ENCODE measurements at regions of chr5 and their contacts with region 1.

Region 1: DNA sequence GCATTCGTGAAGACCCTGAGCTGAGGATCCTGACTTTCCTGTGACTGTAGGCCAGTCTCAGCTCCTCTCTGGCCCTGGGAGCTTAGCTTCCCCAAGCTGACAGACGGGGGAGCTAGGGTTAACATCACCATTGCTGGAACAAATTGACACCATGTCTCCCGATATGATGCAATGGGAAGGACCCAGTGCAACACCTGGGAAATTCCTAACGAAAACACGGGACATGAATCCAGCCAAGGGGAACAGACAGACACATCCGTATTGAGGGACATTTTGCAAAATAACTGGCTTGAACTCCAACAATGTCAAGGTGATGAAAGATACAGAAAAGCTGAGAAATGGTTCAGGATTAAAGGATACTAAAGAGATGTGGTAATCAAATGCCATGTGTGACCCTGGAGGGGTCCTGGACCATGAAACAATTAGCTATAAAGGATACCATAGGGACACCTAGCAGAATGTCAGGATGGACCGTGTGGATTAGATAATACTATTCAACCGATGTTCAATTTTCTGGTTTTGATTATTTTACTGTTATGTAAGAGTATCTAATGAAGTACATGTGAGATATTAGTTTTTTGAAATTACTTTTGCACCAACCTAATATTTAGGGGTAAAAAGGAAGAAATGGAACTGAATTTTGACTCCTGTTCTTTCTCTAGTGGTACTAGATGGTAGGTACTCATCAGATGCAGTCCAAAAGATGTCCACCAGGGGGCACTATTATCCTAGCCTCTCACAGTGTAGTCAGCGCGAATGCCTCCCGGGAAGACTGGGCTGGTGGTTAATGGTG is 52.7 kb downstream of the NDST1 start:
- DNase-seq: peak; percentile 91
- ATAC-seq: peak; percentile 82
- H3K4me3 Mint-ChIP-seq: no peak overlapping the region
- H3K27ac Mint-ChIP-seq: peak overlapping the region; percentile 86
- H3K4me1 Mint-ChIP-seq: peaks cover 15% of the 10 kb centered on the region
- H3K27me3 Mint-ChIP-seq: no peaks in the 10 kb centered on the region
- CTCF ChIP-seq: peak; percentile 93

Region 2: DNA sequence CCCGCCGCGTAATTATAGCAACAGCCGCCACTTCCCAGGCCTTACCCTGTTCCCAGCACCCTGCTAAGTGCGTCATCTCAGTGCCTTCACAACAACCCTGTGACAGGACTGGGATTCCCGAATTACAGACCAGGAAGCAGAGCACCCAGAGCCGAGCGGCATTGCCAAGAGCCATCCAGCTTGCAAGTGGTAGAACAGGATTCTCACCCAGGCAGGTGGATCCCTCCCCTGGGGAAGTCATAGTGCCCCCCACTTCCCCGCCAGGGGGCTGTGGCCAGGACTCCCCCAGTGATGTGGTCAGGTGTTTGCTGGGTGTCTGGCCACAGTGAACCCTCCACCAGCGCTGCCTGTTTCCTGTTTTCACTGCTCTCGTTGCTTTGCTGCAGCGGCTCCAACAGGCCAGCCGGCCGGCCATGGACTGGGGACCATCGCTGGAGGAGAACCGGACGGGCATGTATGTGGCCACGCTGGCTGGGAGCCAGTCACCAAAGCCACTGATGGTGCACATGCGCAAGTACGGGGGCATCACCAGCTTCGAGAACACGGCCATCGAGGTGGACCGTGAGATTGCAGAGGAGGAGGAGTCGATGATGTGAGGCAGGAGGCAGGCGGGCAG is 351.5 kb before region 1 on chr5:
- CTCF ChIA-PET with region 1: no interaction called
- POLR2A ChIA-PET with region 1: no interaction called
- DNase-seq: no peak
- ATAC-seq: no peak
- H3K4me3 Mint-ChIP-seq: no peak overlapping the region
- H3K27ac Mint-ChIP-seq: no peak overlapping the region
- H3K4me1 Mint-ChIP-seq: peaks cover 47% of the 10 kb centered on the region
- H3K27me3 Mint-ChIP-seq: no peaks in the 10 kb centered on the region; the same call in 1 of the 2 replicates
- CTCF ChIP-seq: no peak

Region 3: GRCh38 chr5:150573867-150574817 is 13.5 kb after region 1 on chr5:
- CTCF ChIA-PET with region 1: interaction called, 40 read pairs
- POLR2A ChIA-PET with region 1: no interaction called
- DNase-seq: no peak
- ATAC-seq: peak; percentile 80
- H3K4me3 Mint-ChIP-seq: no peak overlapping the region
- H3K27ac Mint-ChIP-seq: no peak overlapping the region
- H3K4me1 Mint-ChIP-seq: no peaks in the 10 kb centered on the region
- H3K27me3 Mint-ChIP-seq: no peaks in the 10 kb centered on the region
- CTCF ChIP-seq: no peak

Region 4: GRCh38 chr5:150672237-150672883 is 111.8 kb after region 1 on chr5:
- CTCF ChIA-PET with region 1: interaction called, 24 read pairs
- POLR2A ChIA-PET with region 1: no interaction called
- DNase-seq: peak; percentile 85
- ATAC-seq: peak; percentile 73
- H3K4me3 Mint-ChIP-seq: peak overlapping the region; percentile 84
- H3K27ac Mint-ChIP-seq: peak overlapping the region; percentile 96
- H3K4me1 Mint-ChIP-seq: peaks cover 31% of the 10 kb centered on the region
- H3K27me3 Mint-ChIP-seq: no peaks in the 10 kb centered on the region
- CTCF ChIP-seq: no peak

Region 5: GRCh38 chr5:150778517-150779396 is 218.2 kb after region 1 on chr5 and contains the start of gene SMIM3:
- CTCF ChIA-PET with region 1: interaction called, 12 read pairs
- POLR2A ChIA-PET with region 1: no interaction called
- DNase-seq: peak; percentile 88
- ATAC-seq: peak; percentile 86
- H3K4me3 Mint-ChIP-seq: peak within 1 kb of the TSS; percentile 97
- H3K27ac Mint-ChIP-seq: peak within 1 kb of the TSS; percentile 95
- H3K4me1 Mint-ChIP-seq: peaks cover 49% of the 10 kb centered on the region
- H3K27me3 Mint-ChIP-seq: peaks cover 18% of the 10 kb centered on the region
- CTCF ChIP-seq: no peak
- total RNA-seq, gene SMIM3: 11.1 to 14.1 TPM (median 12.2 TPM) in 3 replicates

Measured in WTC11 (cell line).